AG04449 (cell line): ENCODE measurements at regions of chr7 and their contacts with region 1.

Region 1: DNA sequence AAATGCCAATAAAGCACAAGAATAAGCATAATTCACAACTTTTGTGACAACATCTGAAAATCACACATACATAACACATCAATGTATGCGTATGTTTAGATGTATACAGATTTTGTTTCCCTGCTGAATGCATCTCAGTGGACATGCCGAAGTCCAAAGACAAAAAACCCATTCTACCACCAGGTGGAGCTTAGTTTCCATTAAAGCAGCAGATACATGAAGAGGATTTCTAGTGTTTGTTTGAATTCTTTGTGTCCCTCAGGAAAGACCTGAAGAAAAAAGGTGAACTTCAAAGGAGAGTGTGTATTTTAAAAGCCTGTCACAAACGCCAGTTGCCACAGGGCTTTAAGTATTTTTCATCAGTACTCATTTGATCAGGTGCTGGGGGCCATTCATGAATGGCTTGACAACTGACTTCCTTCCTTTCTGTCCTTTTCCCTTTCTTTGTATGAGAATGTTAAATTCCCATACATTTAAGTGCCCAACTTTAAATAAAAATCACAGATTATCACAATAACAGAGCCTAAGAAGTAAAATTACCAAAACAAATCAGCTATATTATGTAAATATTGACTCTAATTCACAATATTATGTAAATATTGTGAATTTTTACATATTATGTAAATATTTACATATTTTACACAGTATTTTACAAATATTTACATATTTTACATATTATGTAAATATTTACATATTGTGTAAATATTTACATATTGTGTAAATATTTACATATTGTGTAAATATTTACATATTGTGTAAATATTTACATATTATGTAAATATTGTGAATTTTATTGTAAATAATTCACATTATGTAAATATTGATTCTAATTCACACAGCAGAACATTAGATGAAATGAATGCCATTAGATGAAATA is 343.0 kb downstream of the CRPPA start:
- DNase-seq: no peak
- H3K4me3 ChIP-seq: no peak overlapping the region
- CTCF ChIP-seq: peak; percentile 63

Region 2: GRCh38 chr7:15707570-15707969 is 370.7 kb before region 1 on chr7:
- CTCF ChIA-PET with region 1: no interaction called
- POLR2A ChIA-PET with region 1: no interaction called
- DNase-seq: no peak
- H3K4me3 ChIP-seq: no peak overlapping the region
- CTCF ChIP-seq: no peak

Region 3: DNA sequence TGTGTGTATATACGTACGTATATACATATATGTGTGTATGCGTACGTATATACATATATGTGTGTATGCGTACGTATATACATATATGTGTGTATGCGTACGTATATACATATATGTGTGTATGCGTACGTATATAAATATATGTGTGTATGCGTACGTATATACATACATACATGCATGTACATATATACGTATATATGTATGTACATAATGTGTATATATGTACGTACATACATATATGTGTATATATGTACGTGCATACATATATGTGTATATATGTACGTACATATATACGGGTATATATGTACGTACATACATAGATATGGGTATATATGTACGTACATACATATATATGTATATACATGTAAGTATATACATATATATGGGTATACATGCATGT is 10.9 kb after region 1 on chr7:
- CTCF ChIA-PET with region 1: interaction called, 10 read pairs
- POLR2A ChIA-PET with region 1: no interaction called
- DNase-seq: no peak
- H3K4me3 ChIP-seq: no peak overlapping the region
- CTCF ChIP-seq: no peak

Region 4: GRCh38 chr7:16098585-16099179 is 20.4 kb after region 1 on chr7:
- CTCF ChIA-PET with region 1: interaction called, 31 read pairs
- POLR2A ChIA-PET with region 1: no interaction called
- DNase-seq: no peak
- H3K4me3 ChIP-seq: no peak overlapping the region
- CTCF ChIP-seq: peak; percentile 20

Region 5: DNA sequence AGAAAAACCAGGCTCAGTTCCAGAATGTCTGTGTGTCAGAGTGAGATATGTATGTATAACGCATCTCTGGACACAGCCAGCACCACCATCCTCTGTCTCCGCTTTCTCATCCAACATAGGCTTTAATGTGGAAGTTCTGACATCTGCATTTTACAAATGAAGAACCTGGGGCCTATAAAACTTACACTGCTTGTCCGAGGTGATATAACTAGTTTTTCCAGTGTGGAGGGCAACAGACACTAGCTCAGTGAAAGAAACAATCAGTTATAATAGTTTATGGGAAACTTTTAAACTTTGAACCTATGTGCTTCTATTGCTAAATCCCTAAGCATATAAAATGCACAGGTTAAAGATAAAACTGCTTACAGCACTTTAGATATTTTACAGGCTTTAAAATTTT is 134.3 kb after region 1 on chr7:
- CTCF ChIA-PET with region 1: no interaction called
- POLR2A ChIA-PET with region 1: no interaction called
- DNase-seq: no peak
- H3K4me3 ChIP-seq: no peak overlapping the region
- CTCF ChIP-seq: no peak